ENCODE measurements at regions of chr17 and their contacts with region 1.

Region 1: DNA sequence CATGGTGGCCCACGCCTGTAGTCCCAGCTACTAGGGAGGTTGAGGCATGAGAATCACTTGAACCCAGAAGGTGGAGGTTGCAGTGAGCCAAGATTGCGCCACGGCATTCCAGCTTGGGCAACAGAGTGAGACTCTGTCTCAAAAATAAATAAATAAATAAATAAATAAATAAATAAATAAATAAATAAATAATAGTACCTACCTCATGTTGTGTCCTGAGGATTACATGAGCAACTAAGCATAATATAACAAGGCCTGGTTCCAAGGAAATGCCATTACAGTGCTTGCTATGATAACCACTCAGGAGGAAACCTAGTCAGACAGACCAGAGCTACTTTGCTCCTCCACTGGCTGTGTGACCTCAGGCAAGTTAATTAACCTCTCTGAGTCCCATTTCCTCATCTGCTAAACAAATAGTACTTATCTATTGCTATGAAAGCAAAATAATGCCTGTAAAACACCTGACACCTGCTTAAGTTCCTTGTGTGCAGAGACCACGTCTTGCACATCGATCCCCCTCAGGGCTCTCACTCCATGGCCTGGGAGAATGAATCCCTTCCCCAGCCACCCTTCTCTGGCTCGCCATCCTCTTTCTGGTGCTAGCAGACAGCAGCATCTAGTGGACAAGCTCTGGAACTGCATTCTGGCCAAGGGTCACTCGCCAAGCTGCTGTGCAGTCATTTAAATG is 7.5 kb downstream of the EPOP start:
- DNase-seq: peak; percentile 86

Region 2: GRCh38 chr17:38509008-38509771 is 158.1 kb before region 1 on chr17:
- intact Hi-C with region 1: loop called in 1 of 2 experiments (anchors 10 kb)
- DNase-seq: peak; percentile 94

Region 3: DNA sequence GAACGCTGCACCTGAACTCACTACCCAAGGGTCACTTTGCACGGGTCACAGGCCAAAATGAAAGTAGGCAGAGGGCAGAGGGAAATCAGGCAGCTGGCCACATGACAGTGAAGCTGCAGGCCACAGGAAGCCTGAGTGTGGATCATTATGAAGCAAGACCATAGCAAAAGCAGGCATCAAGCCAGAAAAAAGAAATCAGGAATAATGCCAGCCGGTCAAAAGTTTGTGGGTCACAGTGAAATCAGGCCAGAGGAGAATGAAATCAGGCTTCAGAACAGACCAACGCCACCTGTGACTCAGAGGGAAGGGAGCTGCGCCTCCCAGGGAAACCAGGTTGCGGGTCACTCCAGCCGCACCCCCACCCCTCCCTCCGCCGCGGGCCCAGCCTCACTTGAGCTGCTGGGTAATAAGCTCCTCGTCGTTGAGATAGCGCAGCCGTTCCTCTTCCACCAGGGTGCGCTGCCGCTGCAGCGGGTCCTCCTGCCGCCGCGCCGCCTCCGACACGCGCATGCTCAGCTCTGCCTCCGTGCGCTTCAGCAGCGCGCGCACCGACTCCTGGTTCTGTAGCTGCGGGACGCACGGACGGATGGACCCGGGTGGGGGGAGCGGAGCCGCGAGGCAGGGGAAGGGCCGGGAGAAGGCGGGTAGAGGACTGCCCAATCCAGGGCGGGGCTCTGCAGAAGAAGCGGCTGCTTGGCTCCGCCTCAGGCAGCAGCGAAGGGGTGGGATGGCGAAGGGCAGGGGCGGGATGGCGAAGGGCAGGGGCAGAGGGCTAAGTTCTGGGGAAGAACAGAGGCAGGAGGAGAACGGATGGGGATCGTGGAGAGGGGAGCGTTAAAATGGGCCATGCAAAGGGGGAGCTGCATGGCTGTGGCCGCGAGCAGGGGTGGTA is 109.2 kb before region 1 on chr17:
- intact Hi-C with region 1: loop called in 1 of 2 experiments (anchors 10 kb)
- DNase-seq: peak; percentile 98

Measured in posterior vena cava (tissue), 2 donors.